ENCODE measurements at regions of chr14 and their contacts with region 1.

Region 1: GRCh38 chr14:75258615-75259466 is 19.8 kb upstream of the FOS start:
- DNase-seq: peak; percentile 100
- H3K4me3 Mint-ChIP-seq: peak overlapping the region; percentile 85
- H3K27ac Mint-ChIP-seq: peak overlapping the region; percentile 99
- H3K4me1 Mint-ChIP-seq: peaks cover 17% of the 10 kb centered on the region
- H3K27me3 Mint-ChIP-seq: peaks cover 54% of the 10 kb centered on the region

Region 2: GRCh38 chr14:75242546-75243273 is 16.1 kb before region 1 on chr14:
- intact Hi-C with region 1: no loop called
- DNase-seq: no peak
- H3K4me3 Mint-ChIP-seq: no peak overlapping the region
- H3K27ac Mint-ChIP-seq: no peak overlapping the region
- H3K4me1 Mint-ChIP-seq: peaks cover 17% of the 10 kb centered on the region
- H3K27me3 Mint-ChIP-seq: peaks cover 49% of the 10 kb centered on the region

Region 3: GRCh38 chr14:75278422-75279161 is 19.8 kb after region 1 on chr14 and contains the start of gene FOS:
- intact Hi-C with region 1: loop called (anchors 1 kb)
- DNase-seq: peak; percentile 97
- H3K4me3 Mint-ChIP-seq: peak within 1 kb of the TSS; percentile 88
- H3K27ac Mint-ChIP-seq: peak within 1 kb of the TSS; percentile 98
- H3K4me1 Mint-ChIP-seq: peaks cover 40% of the 10 kb centered on the region
- H3K27me3 Mint-ChIP-seq: peaks cover 53% of the 10 kb centered on the region
- total RNA-seq, gene FOS: 26.5 and 29.6 TPM in 2 replicates